ENCODE measurements at regions of chr9 and their contacts with region 1.

Region 1: GRCh38 chr9:82332018-82332773 is 343.6 kb downstream of the SPATA31D1 start:
- DNase-seq: no peak
- ATAC-seq: no peak

Region 2: DNA sequence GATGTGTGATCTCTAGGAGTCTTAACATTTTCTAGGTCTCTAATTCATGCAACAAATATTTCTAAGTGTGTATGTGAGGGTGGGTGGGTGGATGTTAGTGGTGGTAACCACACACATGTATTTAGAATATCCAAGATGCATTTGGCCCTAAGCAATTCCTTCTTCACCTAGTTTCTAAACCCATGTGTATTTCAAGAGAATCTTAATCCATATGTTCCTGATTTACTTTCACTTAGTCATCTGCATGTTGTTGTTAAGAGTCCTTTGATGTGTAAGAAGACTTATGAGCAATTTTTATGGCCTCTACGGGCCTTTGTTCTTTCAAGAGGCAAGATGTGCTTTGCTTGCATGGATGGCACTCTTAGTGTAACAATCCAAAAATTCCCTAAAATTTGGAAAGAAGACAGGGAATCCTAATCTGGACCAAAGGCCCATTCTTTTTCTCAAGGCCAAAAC is 61.1 kb before region 1 on chr9:
- intact Hi-C with region 1: loop called (anchors 10 kb)
- DNase-seq: no peak
- ATAC-seq: no peak

Measured in Right ventricle myocardium inferior (tissue), 1 donor.